ENCODE measurements at regions of chr2 and their contacts with region 1.

Region 1: GRCh38 chr2:231568785-231569435 is 23.8 kb upstream of the TEX44 start:
- DNase-seq: no peak
- H3K4me3 ChIP-seq: no peak overlapping the region
- H3K4me1 ChIP-seq: peaks cover 30% of the 10 kb centered on the region
- H3K27me3 ChIP-seq: no peaks in the 10 kb centered on the region

Region 2: GRCh38 chr2:231604685-231605606 is 36.0 kb after region 1 on chr2:
- in situ Hi-C with region 1: loop called (anchors 5 kb)
- DNase-seq: peak; percentile 98 to 99
- H3K4me3 ChIP-seq: peak overlapping the region; percentile 12
- H3K4me1 ChIP-seq: peaks cover 31% of the 10 kb centered on the region
- H3K27me3 ChIP-seq: no peaks in the 10 kb centered on the region

Measured in HAP-1 (cell line).